GM10248 (cell line): ENCODE measurements at regions of chr20 and their contacts with region 1.

Region 1: GRCh38 chr20:10553326-10553984 is 118.3 kb downstream of the SLX4IP start:
- DNase-seq: peak; percentile 30
- CTCF ChIP-seq: peak; percentile 58

Region 2: DNA sequence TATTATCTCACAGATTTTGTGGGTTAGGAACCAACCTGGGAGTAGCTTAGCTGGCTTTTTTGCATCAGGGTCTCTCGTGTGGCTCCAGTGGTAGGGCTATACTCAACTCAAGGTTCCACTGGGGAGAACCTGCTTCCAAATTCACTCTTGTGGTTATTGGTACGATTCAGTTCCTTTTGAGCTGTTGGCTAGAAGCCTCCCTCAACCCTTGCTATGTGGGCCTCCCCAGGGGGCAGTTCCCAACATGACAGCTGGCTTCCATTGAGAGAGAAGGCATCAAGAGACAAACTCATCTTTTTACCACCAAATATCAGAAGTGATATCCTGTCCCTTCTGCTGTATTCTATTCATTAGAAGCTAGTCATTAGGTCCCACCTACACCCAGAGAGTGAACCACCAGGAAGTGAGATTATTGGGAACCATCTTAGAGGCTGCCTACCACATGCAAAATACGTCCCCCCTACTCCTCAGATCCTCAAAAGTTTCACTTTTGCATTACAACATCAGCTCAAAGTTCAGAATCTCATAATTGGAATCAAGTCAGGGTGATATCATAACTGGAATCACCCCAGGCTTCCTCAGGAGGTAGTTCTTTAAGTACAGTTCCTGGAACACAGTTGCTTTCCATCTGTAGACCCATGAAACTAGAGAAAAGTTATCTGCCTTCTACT is 150.4 kb before region 1 on chr20:
- CTCF ChIA-PET with region 1: no interaction called
- POLR2A ChIA-PET with region 1: no interaction called
- DNase-seq: no peak
- CTCF ChIP-seq: no peak

Region 3: DNA sequence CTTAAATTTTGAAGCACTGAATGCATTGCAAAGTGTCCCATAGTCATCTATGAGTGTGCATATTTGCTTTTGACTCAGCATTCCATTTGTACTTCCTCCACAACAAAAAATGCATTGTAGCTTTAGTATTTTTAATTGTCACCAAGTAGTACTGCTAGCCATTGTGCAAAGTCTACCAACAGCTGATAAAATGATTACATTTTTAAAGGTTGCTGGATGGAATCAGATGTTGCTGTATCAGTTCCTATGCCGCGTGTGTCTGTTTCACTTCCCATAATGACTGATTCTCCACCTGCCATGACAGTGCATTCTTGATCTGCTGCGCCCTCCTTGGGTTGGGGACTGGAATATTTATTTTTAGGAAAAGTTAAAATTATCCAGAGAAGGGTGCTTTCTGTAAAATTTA is 77.1 kb before region 1 on chr20:
- CTCF ChIA-PET with region 1: interaction called, 14 read pairs
- POLR2A ChIA-PET with region 1: no interaction called
- DNase-seq: peak; percentile 51
- CTCF ChIP-seq: peak; percentile 51

Region 4: DNA sequence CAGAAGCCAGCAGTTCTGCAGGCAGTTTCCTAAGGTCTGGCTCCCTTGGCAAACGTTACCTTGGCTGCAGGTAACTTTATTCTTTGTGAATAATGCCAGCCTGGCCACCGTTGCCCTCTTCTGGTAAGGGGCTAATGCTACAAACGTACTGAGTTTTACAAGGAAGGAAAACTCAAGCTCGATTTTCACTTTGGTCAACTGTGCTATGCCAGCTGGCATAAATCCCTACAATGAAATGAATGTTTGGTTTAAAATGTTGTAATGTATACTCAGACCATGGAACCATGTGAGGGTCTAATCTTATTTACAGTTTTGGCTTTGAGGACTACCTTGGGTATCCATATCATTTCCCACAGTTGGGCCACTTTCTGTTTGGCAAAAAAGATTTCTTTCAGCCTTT is 16.9 kb before region 1 on chr20:
- CTCF ChIA-PET with region 1: interaction called, 15 read pairs
- POLR2A ChIA-PET with region 1: no interaction called
- DNase-seq: no peak
- CTCF ChIP-seq: peak; percentile 54

Region 5: GRCh38 chr20:10573273-10573950 is 20.0 kb after region 1 on chr20:
- CTCF ChIA-PET with region 1: interaction called, 11 read pairs
- POLR2A ChIA-PET with region 1: no interaction called
- DNase-seq: no peak
- CTCF ChIP-seq: no peak

Region 6: GRCh38 chr20:10581823-10582222 is 28.4 kb after region 1 on chr20:
- CTCF ChIA-PET with region 1: interaction called, 12 read pairs
- POLR2A ChIA-PET with region 1: no interaction called
- DNase-seq: no peak
- CTCF ChIP-seq: no peak